SK-N-SH (cell line): ENCODE measurements at regions of chr6 and their contacts with region 1.

Region 1: GRCh38 chr6:122491919-122492555 is 20.4 kb upstream of the SERINC1 start:
- DNase-seq: peak; percentile 70
- H3K4me3 ChIP-seq: no peak overlapping the region; a peak in 1 of 4 replicates
- H3K27ac ChIP-seq: no peak overlapping the region
- H3K4me1 ChIP-seq: no peaks in the 10 kb centered on the region
- H3K27me3 ChIP-seq: no peaks in the 10 kb centered on the region
- CTCF ChIP-seq: peak; percentile 93
- EP300 ChIP-seq: no peak
- RAD21 ChIP-seq: peak; percentile 87

Region 2: DNA sequence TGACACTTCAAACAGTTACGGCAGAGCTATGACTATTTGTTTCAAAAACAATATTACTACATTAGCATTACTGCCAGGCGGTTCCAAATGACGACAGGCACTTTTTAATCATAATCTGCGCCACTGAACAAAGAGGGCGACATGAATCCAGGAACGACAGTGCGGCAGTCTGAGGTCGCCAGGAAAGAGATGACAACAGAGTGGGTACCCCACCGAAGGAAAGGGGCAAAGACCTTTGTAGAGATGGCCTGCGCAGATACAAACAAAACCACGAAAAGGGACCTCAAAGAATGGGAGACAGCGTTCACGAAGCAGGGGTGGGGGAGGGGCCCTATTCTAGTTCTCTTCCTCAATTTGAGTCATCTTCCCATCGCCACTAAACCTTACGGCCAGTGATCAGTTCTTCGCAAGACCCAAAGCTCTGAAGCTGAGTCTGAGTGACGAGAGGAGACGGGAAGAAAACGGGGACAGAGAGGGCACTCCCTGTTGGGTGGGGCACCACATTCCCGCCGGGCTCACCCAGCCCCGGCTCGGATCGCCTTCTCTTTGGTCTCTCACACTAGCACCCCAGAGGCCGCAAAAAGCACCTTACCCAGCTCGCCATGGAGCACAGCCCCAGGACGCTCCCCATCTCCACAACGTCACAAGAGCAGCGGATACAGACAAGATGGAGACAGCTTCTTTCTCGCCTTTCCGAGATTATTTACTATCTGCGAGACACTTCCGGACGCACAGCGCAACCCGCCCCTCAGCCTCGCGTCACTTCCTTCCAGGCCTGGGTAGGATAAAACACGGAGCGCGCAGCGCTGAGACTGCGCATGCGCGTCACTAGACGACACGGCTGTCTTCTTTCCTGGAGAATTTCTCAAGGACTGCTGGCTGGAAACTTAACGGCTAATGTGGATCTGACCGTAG is 20.7 kb before region 1 on chr6 and contains the start of gene SERINC1:
- CTCF ChIA-PET with region 1: interaction called, 20 read pairs
- POLR2A ChIA-PET with region 1: no interaction called
- DNase-seq: peak; percentile 87
- H3K4me3 ChIP-seq: peak within 1 kb of the TSS; percentile 90 to 98
- H3K27ac ChIP-seq: peak within 1 kb of the TSS; percentile 85 to 91
- H3K4me1 ChIP-seq: peaks cover 0 to 5% of the 10 kb centered on the region in 2 experiments; a peak in 2 of 4 replicates
- H3K27me3 ChIP-seq: no peaks in the 10 kb centered on the region
- CTCF ChIP-seq: no peak
- EP300 ChIP-seq: no peak
- RAD21 ChIP-seq: no peak
- polyA plus RNA-seq, gene SERINC1: 55.2 and 93.1 TPM in 2 replicates

Region 3: DNA sequence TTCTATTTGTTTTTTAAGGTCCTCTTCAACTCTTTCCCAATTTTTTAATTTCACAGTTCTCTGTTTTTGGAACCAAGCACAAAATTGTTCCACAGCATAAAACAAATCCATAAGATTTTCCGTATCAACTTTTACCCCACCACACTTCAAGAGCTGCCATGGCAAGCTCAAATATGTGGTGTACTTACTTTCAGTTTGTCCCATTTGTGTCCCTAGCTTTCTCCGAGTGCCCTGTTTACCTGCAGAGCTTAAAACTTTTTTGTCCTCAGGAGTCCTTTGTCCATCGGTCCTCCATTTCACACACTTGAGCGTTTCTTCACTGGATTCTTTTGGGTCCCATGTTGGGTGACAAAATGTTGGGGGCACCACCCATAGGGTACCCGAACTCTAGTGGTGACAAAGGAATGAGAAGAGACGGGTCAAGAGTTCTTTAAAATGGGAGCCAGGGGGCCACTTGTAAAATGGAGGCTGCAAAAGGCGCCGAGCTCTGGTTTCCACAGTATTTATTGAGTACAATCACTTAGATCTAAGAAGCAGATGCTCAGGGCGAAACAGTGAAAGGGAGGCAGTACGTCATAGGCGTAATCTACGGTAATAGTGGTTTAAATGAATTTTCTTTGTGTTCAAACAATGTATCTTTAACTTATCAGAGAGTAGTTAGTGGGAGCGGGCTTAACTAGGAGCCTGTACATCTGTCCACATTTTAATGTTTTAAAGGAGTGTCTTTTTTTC is 19.3 kb after region 1 on chr6:
- CTCF ChIA-PET with region 1: interaction called, 18 read pairs
- POLR2A ChIA-PET with region 1: no interaction called
- DNase-seq: no peak
- H3K4me3 ChIP-seq: no peak overlapping the region
- H3K27ac ChIP-seq: no peak overlapping the region
- H3K4me1 ChIP-seq: no peaks in the 10 kb centered on the region; a peak in 1 of 4 replicates
- H3K27me3 ChIP-seq: no peaks in the 10 kb centered on the region
- CTCF ChIP-seq: no peak
- EP300 ChIP-seq: no peak
- RAD21 ChIP-seq: no peak

Region 4: GRCh38 chr6:122520179-122520578 is 28.1 kb after region 1 on chr6:
- CTCF ChIA-PET with region 1: interaction called, 21 read pairs
- POLR2A ChIA-PET with region 1: no interaction called
- DNase-seq: no peak
- H3K4me3 ChIP-seq: no peak overlapping the region
- H3K27ac ChIP-seq: no peak overlapping the region
- H3K4me1 ChIP-seq: no peaks in the 10 kb centered on the region
- H3K27me3 ChIP-seq: no peaks in the 10 kb centered on the region
- CTCF ChIP-seq: no peak
- EP300 ChIP-seq: no peak
- RAD21 ChIP-seq: no peak

Region 5: DNA sequence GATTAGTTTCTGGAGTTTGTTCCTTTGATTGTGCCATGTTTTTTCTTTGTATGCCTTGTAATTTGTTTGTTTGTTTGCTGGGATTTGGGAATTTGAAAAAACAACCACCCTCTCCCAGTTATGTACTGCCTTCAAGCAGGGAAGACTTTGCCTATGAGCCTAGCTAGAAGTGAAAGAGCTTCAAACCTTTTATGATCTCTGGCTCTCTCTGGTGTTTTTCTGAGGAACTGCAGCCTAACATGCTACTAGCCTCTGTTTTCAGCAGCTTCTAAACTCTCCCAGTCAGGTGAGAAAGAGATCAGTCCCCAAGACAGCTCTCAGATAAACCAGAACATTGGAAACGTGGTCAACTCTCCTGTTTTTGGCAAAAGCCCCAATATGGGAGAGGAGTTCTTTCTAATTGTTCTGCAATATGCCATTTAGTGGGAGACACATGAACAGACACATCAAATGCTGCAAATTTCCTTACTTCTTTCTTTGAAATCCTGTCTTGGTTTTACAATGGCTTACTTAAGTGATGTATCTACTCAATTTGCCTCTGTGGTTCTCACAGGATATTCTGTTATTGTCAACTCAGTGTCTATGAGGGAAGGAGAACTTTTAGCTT is 38.5 kb after region 1 on chr6:
- CTCF ChIA-PET with region 1: interaction called, 215 read pairs
- POLR2A ChIA-PET with region 1: no interaction called
- DNase-seq: peak; percentile 44
- H3K4me3 ChIP-seq: no peak overlapping the region
- H3K27ac ChIP-seq: no peak overlapping the region
- H3K4me1 ChIP-seq: no peaks in the 10 kb centered on the region
- H3K27me3 ChIP-seq: no peaks in the 10 kb centered on the region
- CTCF ChIP-seq: peak; percentile 83
- EP300 ChIP-seq: no peak
- RAD21 ChIP-seq: peak; percentile 90

Region 6: DNA sequence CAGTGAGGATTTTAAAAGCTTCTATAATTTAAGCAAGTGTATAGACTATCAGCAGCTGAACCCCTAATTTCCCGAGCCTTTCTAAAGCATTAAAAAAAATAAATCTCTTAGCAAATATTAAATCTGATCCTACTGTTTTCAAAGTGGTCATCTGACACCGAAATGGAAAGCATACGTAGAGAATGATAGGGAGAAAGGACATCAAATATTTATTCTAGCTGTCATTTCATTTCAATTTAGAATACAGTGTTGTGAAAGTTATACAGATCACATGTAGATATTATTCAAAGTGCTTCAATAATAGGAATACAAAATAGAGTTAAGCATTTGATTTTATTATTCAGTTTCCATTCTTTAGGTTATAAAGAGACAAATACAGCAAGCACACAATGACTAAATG is 56.2 kb after region 1 on chr6:
- CTCF ChIA-PET with region 1: interaction called, 11 read pairs
- POLR2A ChIA-PET with region 1: no interaction called
- DNase-seq: no peak
- H3K4me3 ChIP-seq: no peak overlapping the region
- H3K27ac ChIP-seq: no peak overlapping the region
- H3K4me1 ChIP-seq: no peaks in the 10 kb centered on the region
- H3K27me3 ChIP-seq: no peaks in the 10 kb centered on the region
- CTCF ChIP-seq: no peak
- EP300 ChIP-seq: no peak
- RAD21 ChIP-seq: no peak

Region 7: DNA sequence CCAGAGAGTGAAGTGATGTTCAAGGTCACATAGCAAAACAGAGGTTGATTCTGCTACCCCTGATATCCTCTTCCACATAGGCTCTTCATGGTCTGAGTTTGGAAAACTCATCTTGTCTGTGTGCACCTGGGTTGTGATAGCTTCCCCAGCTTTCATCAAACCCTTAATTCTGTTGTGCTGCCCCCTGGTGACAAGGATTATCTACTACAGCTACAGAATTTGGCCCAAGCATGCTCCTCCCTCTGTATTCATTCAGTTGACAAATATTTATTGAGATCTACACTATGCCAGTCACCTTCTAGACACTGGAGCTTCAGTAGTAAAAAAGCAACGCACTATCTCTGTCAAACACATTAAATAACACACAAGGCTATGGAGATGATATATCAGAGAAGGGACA is 347.4 kb after region 1 on chr6:
- CTCF ChIA-PET with region 1: interaction called, 20 read pairs
- POLR2A ChIA-PET with region 1: no interaction called
- DNase-seq: peak; percentile 62
- H3K4me3 ChIP-seq: no peak overlapping the region
- H3K27ac ChIP-seq: no peak overlapping the region
- H3K4me1 ChIP-seq: peaks cover 0 to 4% of the 10 kb centered on the region in 2 experiments; a peak in 1 of 4 replicates
- H3K27me3 ChIP-seq: peaks cover 23% of the 10 kb centered on the region
- CTCF ChIP-seq: peak; percentile 67
- EP300 ChIP-seq: no peak
- RAD21 ChIP-seq: peak; percentile 62